ENCODE measurements at regions of chr22 and their contacts with region 1.

Region 1: DNA sequence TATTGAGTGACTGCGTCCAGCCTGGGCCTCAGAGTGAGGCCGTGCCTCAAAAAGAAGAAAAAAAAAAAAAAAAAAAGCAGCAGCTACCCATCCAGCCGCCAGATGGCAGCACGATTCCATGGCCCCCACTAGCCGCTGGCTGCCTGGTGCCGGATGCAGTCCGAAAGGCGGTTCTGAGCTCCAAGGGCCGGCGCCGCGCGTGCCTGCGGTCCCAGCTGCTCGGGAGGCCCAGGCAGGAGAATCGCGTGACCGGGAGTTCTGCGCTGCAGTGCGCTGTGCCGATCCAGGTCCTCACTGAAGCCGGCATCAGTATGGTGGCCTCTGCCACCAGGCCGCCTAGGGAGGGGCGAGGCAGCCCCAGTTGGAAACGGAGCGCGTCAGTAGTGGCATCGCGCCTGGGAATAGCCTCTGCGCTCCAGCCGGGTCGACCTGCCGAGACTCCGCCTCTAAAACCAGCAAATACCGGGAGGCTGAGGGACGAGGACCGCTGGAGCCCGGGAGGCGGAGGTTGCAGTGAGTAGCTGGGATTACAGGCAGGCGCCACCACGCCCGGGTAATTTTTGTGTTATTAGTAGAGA is 19.3 kb downstream of the SCARF2 start:
- DNase-seq: peak; percentile 63 to 78
- ATAC-seq: peak; percentile 80

Region 2: GRCh38 chr22:20380486-20380885 is 37.8 kb before region 1 on chr22:
- intact Hi-C with region 1: no loop called
- DNase-seq: no peak
- ATAC-seq: no peak

Region 3: DNA sequence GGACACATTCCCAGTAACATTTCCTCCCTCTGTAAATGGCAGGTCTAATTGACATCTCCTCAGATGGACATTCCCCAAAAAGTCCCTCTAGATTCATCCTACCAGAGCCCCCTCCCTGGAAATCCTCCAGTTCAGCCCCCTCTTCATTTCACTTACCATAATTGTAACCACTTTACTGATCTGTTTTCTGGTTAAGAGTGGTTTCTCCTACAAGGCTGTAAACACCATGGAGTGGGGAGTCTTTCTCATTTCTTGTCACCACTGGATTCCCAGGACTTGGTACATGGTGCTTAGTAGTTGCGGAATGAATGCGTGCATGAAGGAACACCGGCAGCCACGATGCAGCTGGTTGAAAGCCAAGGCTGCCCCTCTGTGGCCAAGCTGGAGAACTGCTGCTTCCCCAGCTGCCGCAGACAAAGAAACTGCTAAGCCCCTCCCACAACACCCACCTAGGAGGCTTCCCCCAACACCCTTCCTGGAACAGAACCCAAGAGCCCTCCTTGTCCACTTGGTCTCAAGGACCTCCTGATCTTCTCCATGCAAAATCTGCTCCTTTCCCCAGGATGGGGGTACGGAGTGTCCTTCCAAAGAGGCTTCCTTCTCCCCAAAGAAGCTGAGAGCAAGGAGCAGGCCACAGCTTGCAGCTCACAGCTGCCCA is 37.9 kb after region 1 on chr22:
- intact Hi-C with region 1: loop called in 1 of 2 experiments (anchors 2 kb)
- DNase-seq: peak; percentile 53 to 66
- ATAC-seq: peak; percentile 95

Region 4: GRCh38 chr22:20469110-20469868 is 51.0 kb after region 1 on chr22:
- intact Hi-C with region 1: no loop called
- DNase-seq: no peak
- ATAC-seq: no peak

Region 5: DNA sequence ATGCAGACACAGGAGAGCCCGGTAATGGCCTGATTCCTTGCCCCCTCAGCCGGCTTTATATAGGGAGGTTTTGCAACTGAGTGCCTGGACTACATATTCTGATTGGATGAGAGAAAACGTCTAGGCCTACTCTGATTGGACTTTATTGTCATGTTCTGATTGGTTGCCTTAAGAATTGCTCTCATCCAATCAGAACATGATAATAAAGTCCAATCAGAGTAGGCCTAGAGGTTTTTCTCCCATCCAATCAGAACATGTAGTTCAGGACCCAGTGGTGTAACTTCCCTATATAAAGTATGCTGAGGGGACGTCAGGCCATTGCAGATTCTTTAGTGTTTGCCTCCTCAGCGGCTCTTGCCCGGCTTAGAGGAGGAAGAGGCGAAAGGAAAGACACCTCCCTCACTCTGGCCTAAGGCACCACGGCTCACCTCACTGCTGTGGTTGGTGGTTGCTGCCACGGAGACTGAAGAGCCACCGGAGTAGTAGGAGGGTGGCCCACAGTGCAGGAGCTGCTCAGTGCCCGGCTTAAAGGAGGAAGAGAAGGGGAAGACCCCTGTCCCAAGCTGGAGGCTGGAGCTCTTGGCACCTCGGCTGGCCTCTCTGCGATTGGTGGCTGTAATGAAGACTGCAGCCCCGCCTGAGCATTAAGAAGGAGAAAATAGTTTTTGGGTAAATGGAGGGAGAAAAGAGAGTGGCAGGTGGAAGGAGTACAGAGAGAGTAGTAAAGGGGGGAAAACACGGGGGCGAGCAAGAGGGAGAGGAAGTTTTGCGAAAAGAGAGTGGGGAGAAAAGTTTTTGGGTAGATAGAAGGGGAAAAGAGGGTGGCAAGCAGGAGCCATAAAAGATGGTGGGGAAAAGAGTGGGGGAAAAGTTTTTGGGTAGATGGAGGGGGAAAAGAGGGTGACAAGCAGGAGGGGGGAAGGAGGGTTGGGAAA is 238.9 kb after region 1 on chr22:
- intact Hi-C with region 1: no loop called
- DNase-seq: no peak
- ATAC-seq: no peak

Region 6: DNA sequence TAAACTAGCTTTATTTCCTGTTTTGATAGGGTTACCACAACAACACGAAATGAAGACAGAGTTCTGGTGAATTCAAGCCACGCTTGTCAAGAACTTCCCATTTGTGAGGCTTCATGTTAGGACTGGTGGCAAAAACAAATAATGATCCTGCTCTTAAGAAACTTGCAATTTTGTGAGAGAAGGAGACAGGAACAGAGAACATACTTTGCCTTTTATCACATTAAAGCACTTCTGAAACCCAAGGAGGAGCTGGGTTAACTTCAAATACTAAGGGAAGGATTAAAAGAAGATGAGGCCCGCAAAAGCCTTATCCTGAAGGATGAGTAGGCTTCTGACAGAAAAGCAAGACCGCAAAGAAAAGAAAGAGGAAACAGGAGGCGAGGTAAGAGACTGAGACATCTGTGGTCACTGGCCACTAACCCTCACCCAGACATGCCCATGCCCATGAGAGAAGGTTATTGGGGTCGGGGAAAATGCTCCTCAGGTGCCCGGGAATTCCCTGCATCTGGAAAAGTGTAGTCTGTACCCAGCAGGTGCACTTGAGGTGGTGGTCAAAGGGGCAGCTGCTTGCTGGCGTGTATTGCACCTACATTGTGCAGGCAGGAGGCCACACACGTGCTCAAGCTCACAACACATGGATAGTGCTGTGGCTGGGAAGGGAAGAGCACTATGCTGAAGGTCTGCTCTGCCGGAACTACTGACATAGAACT is 1398.6 kb after region 1 on chr22:
- intact Hi-C with region 1: no loop called
- DNase-seq: no peak
- ATAC-seq: peak; percentile 92

Measured in left colon (tissue), 2 donors.